ENCODE measurements at regions of chr6 and their contacts with region 1.

Region 1: GRCh38 chr6:148559848-148560433 is 186.9 kb upstream of the UST start:
- DNase-seq: peak; percentile 68 to 82 (median 81)
- H3K4me3 ChIP-seq: peak overlapping the region; percentile 18 to 71 (median 51)
- H3K27ac ChIP-seq: no peak overlapping the region
- H3K4me1 ChIP-seq: peaks cover 4 to 24% (median 18%) of the 10 kb centered on the region in 4 experiments
- H3K27me3 ChIP-seq: peaks cover 0 to 22% (median 9%) of the 10 kb centered on the region in 5 experiments

Region 2: DNA sequence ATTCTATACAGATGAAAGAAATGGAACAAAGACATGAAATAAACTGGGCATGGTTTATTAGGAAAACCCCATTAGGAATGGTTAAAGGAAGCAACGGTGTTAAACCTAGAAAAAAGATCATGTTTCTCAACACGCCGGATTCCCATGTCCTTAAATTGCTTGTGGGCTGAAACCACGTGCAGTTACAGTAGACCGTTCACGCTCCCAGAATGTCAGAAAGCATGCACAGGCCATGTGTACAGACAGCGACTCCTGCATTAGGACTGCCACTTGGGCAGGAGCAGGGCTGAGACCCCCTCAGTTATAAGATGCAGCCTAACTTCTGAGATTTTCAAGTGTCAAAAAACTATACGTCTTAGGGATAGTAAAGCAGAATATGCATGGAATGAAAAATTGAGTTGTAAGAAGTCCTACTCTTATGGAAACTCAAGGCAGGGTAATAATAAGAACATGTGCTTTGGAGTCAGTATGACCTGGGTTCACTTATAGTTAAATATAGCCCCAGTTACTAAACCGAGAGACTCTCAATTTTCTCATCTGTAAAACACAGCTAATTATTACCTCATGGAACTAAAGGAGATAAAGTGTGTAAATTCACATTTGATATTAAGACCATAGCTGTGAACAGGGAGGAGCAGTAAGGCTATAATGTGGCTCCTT is 12.9 kb after region 1 on chr6:
- CTCF ChIA-PET with region 1: interaction called, 35 read pairs
- POLR2A ChIA-PET with region 1: no interaction called
- DNase-seq: no peak
- H3K4me3 ChIP-seq: no peak overlapping the region
- H3K27ac ChIP-seq: no peak overlapping the region
- H3K4me1 ChIP-seq: peaks cover 0 to 9% (median 4%) of the 10 kb centered on the region in 4 experiments
- H3K27me3 ChIP-seq: no peaks in the 10 kb centered on the region

Measured in common myeloid progenitor, CD34-positive (primary cell).